Activated CD4-positive, alpha-beta T cell treated with anti-CD3 and anti-CD28 coated beads for 36 hours (primary cell): ENCODE measurements at regions of chr5 and their contacts with region 1.

Region 1: GRCh38 chr5:143008809-143009521 is 238.8 kb downstream of the ARHGAP26 start:
- DNase-seq: peak; percentile 87
- ATAC-seq: peak; percentile 91
- H3K4me3 Mint-ChIP-seq: peak overlapping the region; percentile 34
- H3K27ac Mint-ChIP-seq: peak overlapping the region; percentile 83
- H3K4me1 Mint-ChIP-seq: peaks cover 56% of the 10 kb centered on the region
- H3K27me3 Mint-ChIP-seq: no peaks in the 10 kb centered on the region

Region 2: GRCh38 chr5:143054480-143054941 is 45.5 kb after region 1 on chr5:
- CTCF ChIA-PET with region 1: interaction called, 3 read pairs
- POLR2A ChIA-PET with region 1: no interaction called
- intact Hi-C with region 1: loop called in 1 of 2 experiments (anchors 1 kb)
- DNase-seq: peak; percentile 49
- ATAC-seq: peak; percentile 40
- H3K4me3 Mint-ChIP-seq: no peak overlapping the region
- H3K27ac Mint-ChIP-seq: peak overlapping the region; percentile 90
- H3K4me1 Mint-ChIP-seq: peaks cover 75% of the 10 kb centered on the region
- H3K27me3 Mint-ChIP-seq: no peaks in the 10 kb centered on the region

Region 3: DNA sequence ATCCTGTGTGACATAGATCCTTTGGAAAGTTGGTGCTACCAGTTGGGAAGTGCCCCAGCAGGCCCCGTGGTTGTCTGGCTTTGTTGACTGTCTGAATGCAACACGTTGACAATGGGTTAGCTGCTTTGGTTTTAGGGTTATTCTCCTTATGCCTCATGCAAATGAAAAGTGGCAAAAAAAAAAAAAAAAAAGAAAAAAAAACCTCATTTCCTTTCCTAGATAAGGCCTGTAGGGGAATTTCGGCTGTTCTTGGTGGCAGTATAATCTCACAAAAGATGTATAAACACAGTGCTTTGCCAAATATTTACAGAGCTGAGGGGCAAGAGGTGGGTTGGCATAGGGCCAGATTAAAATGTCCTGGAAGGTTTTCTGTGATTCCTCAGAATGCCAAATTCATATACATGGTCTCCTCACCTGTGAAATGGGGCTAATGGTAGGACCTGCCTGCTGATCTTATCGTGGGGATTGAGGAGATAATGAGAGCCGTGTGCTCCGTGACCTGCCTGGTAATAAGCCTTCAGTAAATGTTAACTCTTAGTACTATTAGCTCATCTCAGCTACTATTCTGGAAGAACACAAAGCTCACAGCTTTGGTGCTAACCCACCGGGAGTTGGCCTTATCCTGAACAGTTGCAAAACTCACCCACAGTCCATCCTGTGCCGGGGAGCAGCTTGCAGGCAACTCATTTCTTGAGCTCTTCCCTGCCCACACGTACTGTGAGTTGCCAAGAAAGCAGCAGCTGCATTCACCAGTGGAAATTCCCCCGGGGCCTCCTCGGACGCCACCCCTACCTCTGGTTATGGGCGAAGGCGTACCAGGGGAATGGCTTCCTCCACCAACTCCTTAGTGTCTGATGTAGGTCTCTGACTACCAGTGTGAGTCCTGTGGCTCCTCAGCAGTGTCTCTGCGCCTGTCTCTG is 174.2 kb after region 1 on chr5:
- CTCF ChIA-PET with region 1: interaction called, 4 read pairs
- POLR2A ChIA-PET with region 1: interaction called, 4 read pairs
- intact Hi-C with region 1: loop called in 1 of 2 experiments (anchors 1 kb)
- DNase-seq: peak; percentile 84
- ATAC-seq: peak; percentile 79
- H3K4me3 Mint-ChIP-seq: peak overlapping the region; percentile 9
- H3K27ac Mint-ChIP-seq: peak overlapping the region; percentile 79
- H3K4me1 Mint-ChIP-seq: peaks cover 47% of the 10 kb centered on the region
- H3K27me3 Mint-ChIP-seq: no peaks in the 10 kb centered on the region

Region 4: GRCh38 chr5:143355720-143356119 is 346.8 kb after region 1 on chr5:
- CTCF ChIA-PET with region 1: interaction called, 3 read pairs
- POLR2A ChIA-PET with region 1: no interaction called
- intact Hi-C with region 1: loop called (anchors 1 to 5 kb)
- DNase-seq: peak; percentile 59
- ATAC-seq: peak; percentile 34
- H3K4me3 Mint-ChIP-seq: no peak overlapping the region
- H3K27ac Mint-ChIP-seq: no peak overlapping the region
- H3K4me1 Mint-ChIP-seq: peaks cover 77% of the 10 kb centered on the region
- H3K27me3 Mint-ChIP-seq: no peaks in the 10 kb centered on the region

Region 5: DNA sequence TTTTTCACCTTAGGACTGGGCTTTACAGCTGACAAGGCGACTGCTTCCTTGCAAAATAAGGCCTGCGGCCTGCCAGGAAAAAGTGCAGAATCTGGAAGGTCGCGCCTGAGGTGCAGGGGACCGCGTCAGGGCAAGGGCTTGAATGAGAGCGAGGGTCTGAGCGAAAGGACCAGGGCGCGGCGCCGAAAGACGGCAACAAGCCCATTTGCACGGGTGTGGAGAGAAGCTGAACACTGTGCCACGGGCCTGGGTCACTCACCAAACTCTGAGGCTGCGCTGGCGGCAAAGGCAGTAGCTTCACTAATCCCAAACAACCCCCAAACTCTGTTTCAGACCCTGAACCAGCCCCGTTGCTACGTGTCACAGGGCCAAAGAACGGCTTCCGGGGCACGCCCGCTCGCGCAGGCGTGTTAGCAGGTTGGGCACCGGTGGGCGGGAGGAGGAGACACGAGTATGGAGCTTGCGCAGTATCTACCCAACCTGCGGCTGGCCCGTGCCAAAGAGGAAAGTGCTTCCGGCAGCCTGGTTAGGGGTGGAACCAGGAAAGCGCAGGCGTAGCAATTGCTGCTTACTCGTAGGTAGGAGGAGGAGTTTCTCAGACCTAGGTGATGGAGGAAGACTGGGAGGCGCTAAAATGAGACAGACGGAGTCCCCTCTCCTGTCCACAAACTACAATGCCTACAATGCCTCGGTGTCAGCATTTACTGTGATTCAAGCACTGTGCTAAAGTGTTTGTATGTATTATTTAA is 1161.5 kb after region 1 on chr5 and contains the starts of genes KCTD16 and YIPF5:
- CTCF ChIA-PET with region 1: no interaction called
- POLR2A ChIA-PET with region 1: no interaction called
- intact Hi-C with region 1: loop called in 1 of 2 experiments (anchors 1 kb)
- DNase-seq: peak; percentile 98
- ATAC-seq: peak; percentile 98
- H3K4me3 Mint-ChIP-seq: peak within 1 kb of the TSS; percentile 99
- H3K27ac Mint-ChIP-seq: peak within 1 kb of the TSS; percentile 96
- H3K4me1 Mint-ChIP-seq: peaks cover 43% of the 10 kb centered on the region
- H3K27me3 Mint-ChIP-seq: no peaks in the 10 kb centered on the region
- total RNA-seq, gene KCTD16: 0.14 to 0.25 TPM
- total RNA-seq, gene YIPF5: 39.1 to 44.2 TPM